ENCODE measurements at regions of chr11 and their contacts with region 1.

Region 1: DNA sequence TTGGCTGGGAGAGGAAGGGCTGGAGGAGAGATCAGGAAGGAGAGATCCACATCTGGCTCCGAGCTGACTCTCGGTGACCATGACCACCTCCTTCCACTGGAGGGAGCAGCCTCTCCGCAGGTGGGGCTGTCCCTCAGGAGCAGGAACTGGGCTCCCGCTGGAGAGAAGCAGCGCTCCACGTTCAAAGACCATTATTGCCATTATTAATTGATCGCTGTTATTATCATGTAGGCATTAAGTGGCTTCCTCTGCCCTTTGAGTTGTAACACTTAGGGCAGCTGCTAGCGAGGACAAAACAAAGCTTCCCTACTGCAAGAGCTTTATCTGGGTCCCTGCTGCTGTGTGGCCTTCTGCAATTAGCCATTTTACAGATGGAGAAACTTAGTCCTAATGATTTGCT is 251.9 kb downstream of the ST3GAL4 start:
- DNase-seq: peak; percentile 31
- ATAC-seq: peak; percentile 99
- H3K4me3 ChIP-seq: peak overlapping the region in 1 of 2 experiments; percentile 20; a peak in 1 of 4 replicates
- H3K27ac ChIP-seq: no peak overlapping the region
- H3K4me1 ChIP-seq: peaks cover 0 to 4% of the 10 kb centered on the region in 2 experiments; a peak in 2 of 4 replicates
- H3K27me3 ChIP-seq: peaks cover 24% of the 10 kb centered on the region; the same call in 1 of the 2 replicates
- CTCF ChIP-seq: peak; percentile 55 to 83 (median 82)
- POLR2A ChIP-seq: no peak
- RAD21 ChIP-seq: peak; percentile 86

Region 2: GRCh38 chr11:126416542-126417090 is 190.8 kb before region 1 on chr11:
- CTCF ChIA-PET with region 1: no interaction called
- POLR2A ChIA-PET with region 1: no interaction called
- RAD21 ChIA-PET with region 1: no interaction called
- intact Hi-C with region 1: no loop called
- DNase-seq: no peak
- ATAC-seq: no peak
- H3K4me3 ChIP-seq: no peak overlapping the region
- H3K27ac ChIP-seq: no peak overlapping the region
- H3K4me1 ChIP-seq: no peaks in the 10 kb centered on the region
- H3K27me3 ChIP-seq: no peaks in the 10 kb centered on the region
- CTCF ChIP-seq: no peak
- POLR2A ChIP-seq: no peak
- RAD21 ChIP-seq: no peak

Region 3: DNA sequence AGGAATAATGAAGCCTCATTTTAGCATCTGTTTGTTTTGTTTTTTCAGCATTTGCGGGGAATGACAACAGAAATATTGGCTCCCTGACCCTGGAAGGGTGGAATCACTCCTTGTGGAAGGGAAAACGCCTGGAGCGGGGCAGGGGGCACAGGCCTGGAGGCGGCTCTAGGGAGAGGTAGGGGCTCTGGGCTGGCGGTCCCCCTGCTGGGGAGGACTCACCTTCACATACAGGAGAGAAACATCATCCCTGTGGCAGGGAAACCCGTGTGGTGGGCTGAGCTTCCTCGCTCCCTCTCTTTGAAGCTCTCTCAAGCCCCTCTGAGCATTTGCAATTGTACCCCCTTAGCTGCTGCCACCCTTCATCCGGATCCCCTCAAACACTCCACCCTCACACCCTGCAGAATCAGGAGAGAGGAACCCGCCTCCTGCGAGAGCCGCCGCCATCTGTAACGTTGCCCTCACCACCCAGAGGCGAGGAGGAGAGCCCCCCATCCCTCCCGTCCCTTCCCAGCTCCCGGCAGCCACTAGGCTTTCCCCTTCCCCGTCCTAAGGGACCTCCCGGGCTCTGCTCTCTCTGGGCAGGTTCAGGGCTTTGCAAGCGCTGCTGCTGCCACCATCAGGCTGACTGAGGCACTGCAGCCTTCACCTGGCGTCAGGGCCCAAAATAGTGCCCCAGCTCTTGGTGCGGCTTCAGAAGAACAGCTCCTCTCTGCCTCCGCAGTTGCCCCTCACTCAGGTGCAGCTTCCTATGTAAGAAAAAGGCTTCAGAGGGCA is 382.8 kb after region 1 on chr11:
- CTCF ChIA-PET with region 1: interaction called, 14 read pairs
- POLR2A ChIA-PET with region 1: no interaction called
- RAD21 ChIA-PET with region 1: interaction called in 1 of 2 experiments, 4 read pairs
- intact Hi-C with region 1: loop called (anchors 1 kb)
- DNase-seq: peak; percentile 18
- ATAC-seq: peak; percentile 97
- H3K4me3 ChIP-seq: no peak overlapping the region
- H3K27ac ChIP-seq: no peak overlapping the region
- H3K4me1 ChIP-seq: no peaks in the 10 kb centered on the region
- H3K27me3 ChIP-seq: 0 out of 2 replicates have a peak, but pooled peaks cover 6% of the 10 kb centered on the region
- CTCF ChIP-seq: peak; percentile 49 to 96 (median 85); a peak in 5 of 6 replicates
- POLR2A ChIP-seq: no peak
- RAD21 ChIP-seq: peak; percentile 82

Region 4: DNA sequence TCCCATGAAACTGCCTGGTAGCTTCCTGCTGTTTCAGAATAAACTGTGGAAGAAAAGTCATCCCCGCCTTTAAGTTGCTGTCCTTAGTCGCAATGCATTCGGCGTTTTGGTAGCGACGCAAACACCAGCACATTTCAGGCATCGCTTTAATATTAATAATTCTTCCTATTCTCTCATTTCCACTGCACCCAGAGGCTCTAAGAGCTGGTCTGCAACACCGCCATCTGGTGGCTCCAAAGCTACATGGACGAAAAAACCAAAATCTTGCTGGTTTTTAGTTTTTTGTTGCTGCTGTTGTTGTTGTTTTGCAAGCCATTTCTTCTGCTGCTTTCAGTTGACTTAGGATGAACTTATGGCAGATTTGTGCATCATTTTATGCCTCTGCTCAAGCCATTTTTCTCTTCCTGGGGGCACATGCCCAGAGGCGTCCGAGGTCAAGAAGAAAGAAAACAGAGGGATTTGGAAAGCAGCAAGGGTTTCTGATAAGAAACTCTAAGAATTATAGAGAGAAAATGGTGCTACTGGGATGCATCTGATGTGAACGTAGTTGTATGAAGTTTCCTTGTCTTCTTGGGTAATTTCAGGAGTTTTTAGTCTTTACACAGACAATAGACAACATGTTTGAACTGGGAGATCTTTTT is 738.6 kb after region 1 on chr11:
- CTCF ChIA-PET with region 1: no interaction called
- POLR2A ChIA-PET with region 1: no interaction called
- RAD21 ChIA-PET with region 1: no interaction called
- intact Hi-C with region 1: loop called (anchors 5 kb)
- DNase-seq: no peak
- ATAC-seq: no peak
- H3K4me3 ChIP-seq: no peak overlapping the region
- H3K27ac ChIP-seq: no peak overlapping the region
- H3K4me1 ChIP-seq: no peaks in the 10 kb centered on the region
- H3K27me3 ChIP-seq: no peaks in the 10 kb centered on the region
- CTCF ChIP-seq: peak in 2 of 3 experiments; percentile 52 to 57; a peak in 4 of 6 replicates
- POLR2A ChIP-seq: no peak
- RAD21 ChIP-seq: peak; percentile 22; the same call in 1 of the 2 replicates